ENCODE measurements at regions of chr7 and their contacts with region 1.

Region 1: GRCh38 chr7:65307651-65308299 is 65.9 kb upstream of the ZNF92 start:
- DNase-seq: peak; percentile 61 to 72
- H3K4me3 ChIP-seq: no peak overlapping the region
- H3K4me3 Mint-ChIP-seq: no peak overlapping the region
- H3K27ac Mint-ChIP-seq: no peak overlapping the region
- H3K4me1 ChIP-seq: no peaks in the 10 kb centered on the region
- H3K4me1 Mint-ChIP-seq: no peaks in the 10 kb centered on the region
- H3K27me3 ChIP-seq: no peaks in the 10 kb centered on the region
- H3K27me3 Mint-ChIP-seq: no peaks in the 10 kb centered on the region
- CTCF ChIP-seq: peak; percentile 78 to 92

Region 2: GRCh38 chr7:64887756-64888508 is 419.8 kb before region 1 on chr7:
- CTCF ChIA-PET with region 1: no interaction called
- POLR2A ChIA-PET with region 1: no interaction called
- intact Hi-C with region 1: loop called (anchors 1 kb)
- DNase-seq: peak; percentile 58 to 62
- H3K4me3 ChIP-seq: peak overlapping the region; percentile 63
- H3K4me3 Mint-ChIP-seq: peak overlapping the region; percentile 73
- H3K27ac Mint-ChIP-seq: no peak overlapping the region
- H3K4me1 ChIP-seq: peaks cover 6% of the 10 kb centered on the region; the same call in 1 of the 2 replicates
- H3K4me1 Mint-ChIP-seq: no peaks in the 10 kb centered on the region
- H3K27me3 ChIP-seq: no peaks in the 10 kb centered on the region
- H3K27me3 Mint-ChIP-seq: peaks cover 3% of the 10 kb centered on the region
- CTCF ChIP-seq: peak; percentile 40 to 58

Region 3: GRCh38 chr7:65216459-65216858 is 91.3 kb before region 1 on chr7:
- CTCF ChIA-PET with region 1: interaction called, 16 read pairs
- POLR2A ChIA-PET with region 1: no interaction called
- intact Hi-C with region 1: loop called (anchors 1 kb)
- DNase-seq: peak; percentile 81 to 84
- H3K4me3 ChIP-seq: no peak overlapping the region
- H3K4me3 Mint-ChIP-seq: peak overlapping the region; percentile 29
- H3K27ac Mint-ChIP-seq: no peak overlapping the region
- H3K4me1 ChIP-seq: no peaks in the 10 kb centered on the region
- H3K4me1 Mint-ChIP-seq: no peaks in the 10 kb centered on the region
- H3K27me3 ChIP-seq: no peaks in the 10 kb centered on the region
- H3K27me3 Mint-ChIP-seq: no peaks in the 10 kb centered on the region
- CTCF ChIP-seq: peak; percentile 80 to 83

Region 4: GRCh38 chr7:66330961-66331360 is 1023.2 kb after region 1 on chr7:
- CTCF ChIA-PET with region 1: no interaction called
- POLR2A ChIA-PET with region 1: no interaction called
- intact Hi-C with region 1: no loop called
- DNase-seq: no peak
- H3K4me3 ChIP-seq: no peak overlapping the region
- H3K4me3 Mint-ChIP-seq: no peak overlapping the region
- H3K27ac Mint-ChIP-seq: no peak overlapping the region
- H3K4me1 ChIP-seq: peaks cover 13% of the 10 kb centered on the region
- H3K4me1 Mint-ChIP-seq: peaks cover 16% of the 10 kb centered on the region
- H3K27me3 ChIP-seq: no peaks in the 10 kb centered on the region
- H3K27me3 Mint-ChIP-seq: no peaks in the 10 kb centered on the region
- CTCF ChIP-seq: no peak

Measured in Caco-2 (cell line).